Calu3 (cell line): ENCODE measurements at regions of chr5 and their contacts with region 1.

Region 1: GRCh38 chr5:104626122-104626521 is 1063.5 kb upstream of the NUDT12 start:
- DNase-seq: no peak
- H3K4me3 Mint-ChIP-seq: no peak overlapping the region
- H3K27ac Mint-ChIP-seq: no peak overlapping the region
- H3K4me1 Mint-ChIP-seq: no peaks in the 10 kb centered on the region
- H3K27me3 Mint-ChIP-seq: no peaks in the 10 kb centered on the region
- CTCF ChIP-seq: no peak

Region 2: GRCh38 chr5:103021314-103021713 is 1604.8 kb before region 1 on chr5:
- CTCF ChIA-PET with region 1: interaction called, 10 read pairs
- intact Hi-C with region 1: no loop called
- DNase-seq: no peak
- H3K4me3 Mint-ChIP-seq: no peak overlapping the region
- H3K27ac Mint-ChIP-seq: no peak overlapping the region
- H3K4me1 Mint-ChIP-seq: no peaks in the 10 kb centered on the region
- H3K27me3 Mint-ChIP-seq: no peaks in the 10 kb centered on the region
- CTCF ChIP-seq: no peak

Region 3: GRCh38 chr5:104774372-104774771 is 148.2 kb after region 1 on chr5:
- CTCF ChIA-PET with region 1: no interaction called
- intact Hi-C with region 1: no loop called
- DNase-seq: no peak
- H3K4me3 Mint-ChIP-seq: no peak overlapping the region
- H3K27ac Mint-ChIP-seq: no peak overlapping the region
- H3K4me1 Mint-ChIP-seq: no peaks in the 10 kb centered on the region
- H3K27me3 Mint-ChIP-seq: no peaks in the 10 kb centered on the region
- CTCF ChIP-seq: no peak

Region 4: DNA sequence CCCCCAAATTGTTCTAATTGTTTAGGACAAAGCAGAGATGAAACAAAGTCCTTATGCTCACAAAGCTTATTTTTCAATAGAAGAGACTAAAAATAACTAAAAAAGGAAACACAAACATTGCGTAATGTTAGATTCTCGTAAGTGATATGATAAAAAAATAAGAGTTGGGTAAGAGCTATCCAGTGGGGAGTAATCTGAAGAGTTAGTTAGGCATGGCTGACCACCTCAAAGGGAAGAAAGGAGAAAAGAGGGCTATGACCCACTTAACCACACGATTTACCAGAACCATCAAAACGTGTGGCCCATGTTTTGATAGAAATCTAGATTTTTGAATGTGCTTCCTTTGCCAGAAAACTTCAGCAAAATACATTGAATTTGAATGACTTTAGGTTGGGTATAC is 233.3 kb after region 1 on chr5:
- CTCF ChIA-PET with region 1: no interaction called
- intact Hi-C with region 1: no loop called
- DNase-seq: no peak
- H3K4me3 Mint-ChIP-seq: no peak overlapping the region
- H3K27ac Mint-ChIP-seq: no peak overlapping the region
- H3K4me1 Mint-ChIP-seq: peaks cover 16% of the 10 kb centered on the region
- H3K27me3 Mint-ChIP-seq: no peaks in the 10 kb centered on the region
- CTCF ChIP-seq: no peak